Panc1 (cell line): ENCODE measurements at regions of chrX and their contacts with region 1.

Region 1: GRCh38 chrX:49043220-49043986 is at the start of gene TFE3:
- DNase-seq: peak; percentile 96
- ATAC-seq: peak; percentile 95
- H3K4me3 ChIP-seq: peak within 1 kb of the TSS; percentile 73 to 93
- H3K27ac ChIP-seq: peak within 1 kb of the TSS; percentile 91
- H3K4me1 ChIP-seq: peaks cover 18% of the 10 kb centered on the region
- H3K27me3 ChIP-seq: no peaks in the 10 kb centered on the region
- CTCF ChIP-seq: peak; percentile 84
- total RNA-seq, gene TFE3: 45.9 TPM

Region 2: DNA sequence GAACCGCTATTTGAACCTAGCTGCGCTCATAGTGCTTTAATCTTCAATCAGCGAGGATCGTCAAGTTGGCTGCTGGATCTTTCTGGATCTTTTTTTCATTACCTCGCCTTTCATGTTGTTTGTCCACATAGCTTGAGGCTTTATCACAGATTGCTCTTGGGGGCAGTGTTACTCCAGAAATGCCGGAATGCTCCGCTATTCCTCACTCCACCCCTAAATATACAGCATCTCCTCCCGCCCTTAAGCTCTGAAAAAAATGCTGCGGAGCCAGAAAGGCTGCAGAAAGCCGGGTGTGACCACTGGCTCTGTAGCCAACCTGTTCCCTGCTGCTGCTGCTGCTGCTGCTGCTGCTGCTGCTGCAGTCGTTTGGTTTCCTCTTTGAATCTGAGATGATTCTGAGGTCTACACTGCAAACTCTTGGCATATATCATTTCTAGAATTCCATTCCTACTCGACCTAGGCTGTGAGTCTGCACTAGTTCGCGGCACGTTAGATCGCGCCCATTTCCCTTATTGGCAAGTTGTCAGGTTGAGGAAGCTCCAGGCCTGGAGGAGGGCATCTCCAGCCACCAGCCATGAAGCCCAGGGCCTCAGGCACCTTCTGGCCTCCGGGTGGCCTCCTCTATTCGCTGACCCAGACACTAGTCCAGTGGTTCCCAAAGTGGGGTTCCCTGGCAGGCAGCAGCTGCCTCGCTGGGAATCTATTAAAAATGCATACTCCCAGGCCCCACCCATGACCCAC is 411.9 kb before region 1 on chrX:
- CTCF ChIA-PET with region 1: no interaction called
- POLR2A ChIA-PET with region 1: interaction called, 10 read pairs
- in situ Hi-C with region 1: no loop called
- intact Hi-C with region 1: no loop called
- DNase-seq: peak; percentile 85
- ATAC-seq: peak; percentile 98
- H3K4me3 ChIP-seq: peak overlapping the region in 1 of 2 experiments; percentile 2; a peak in 1 of 4 replicates
- H3K27ac ChIP-seq: peak overlapping the region; percentile 44; the same call in 1 of the 2 replicates
- H3K4me1 ChIP-seq: peaks cover 4% of the 10 kb centered on the region; the same call in 1 of the 2 replicates
- H3K27me3 ChIP-seq: no peaks in the 10 kb centered on the region
- CTCF ChIP-seq: peak; percentile 67; the same call in 1 of the 2 replicates

Region 3: DNA sequence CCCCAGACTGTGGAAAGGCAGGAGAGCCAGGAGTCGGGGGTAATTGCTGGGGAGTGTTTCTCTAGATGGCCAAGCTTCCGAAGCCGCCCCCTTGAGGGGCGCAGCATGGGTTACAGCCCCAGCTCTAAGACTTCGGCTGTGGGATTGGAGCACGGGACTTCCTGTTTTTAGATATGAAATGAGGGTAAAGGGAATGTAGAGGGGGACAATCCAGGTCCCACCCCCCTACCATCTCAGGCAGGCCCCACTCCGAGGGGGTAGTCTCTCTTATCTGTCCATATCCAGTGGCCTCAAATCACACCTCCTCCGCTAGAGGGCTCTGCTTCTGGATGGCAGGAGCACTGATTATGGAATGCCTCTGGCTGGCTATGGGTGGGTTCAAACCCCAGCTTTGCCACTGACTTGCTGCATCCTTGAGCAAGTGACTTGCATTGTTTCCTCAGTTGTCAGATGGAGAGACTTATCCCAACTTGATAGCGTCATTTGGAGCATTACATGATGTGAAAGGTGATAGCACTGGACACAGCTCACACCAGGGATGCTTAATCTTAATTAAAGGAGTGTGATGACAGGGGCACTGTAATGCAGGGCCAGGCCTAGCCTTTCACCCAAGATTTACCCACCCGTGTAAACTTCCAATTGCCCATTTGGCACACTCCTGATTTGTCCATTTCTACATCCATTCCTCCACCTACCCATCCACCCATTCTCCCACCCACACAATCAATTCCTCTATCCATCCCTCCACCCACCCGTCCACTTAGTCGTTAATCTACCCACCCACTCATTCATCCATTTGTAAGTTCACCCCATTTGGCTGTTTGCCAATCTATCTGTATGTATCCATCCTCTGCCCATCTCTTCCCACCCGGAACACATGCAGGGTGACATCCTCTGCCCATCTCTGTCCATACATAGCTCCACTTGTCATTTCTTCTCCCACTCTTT is 70.9 kb before region 1 on chrX:
- CTCF ChIA-PET with region 1: no interaction called
- POLR2A ChIA-PET with region 1: no interaction called
- in situ Hi-C with region 1: no loop called
- intact Hi-C with region 1: loop called (anchors 10 kb)
- DNase-seq: no peak
- ATAC-seq: peak; percentile 71
- H3K4me3 ChIP-seq: peak overlapping the region; percentile 40 to 70
- H3K27ac ChIP-seq: peak overlapping the region; percentile 68
- H3K4me1 ChIP-seq: no peaks in the 10 kb centered on the region
- H3K27me3 ChIP-seq: no peaks in the 10 kb centered on the region
- CTCF ChIP-seq: peak; percentile 88